CD8-positive, alpha-beta memory T cell (primary cell): ENCODE measurements at regions of chrX and their contacts with region 1.

Region 1: DNA sequence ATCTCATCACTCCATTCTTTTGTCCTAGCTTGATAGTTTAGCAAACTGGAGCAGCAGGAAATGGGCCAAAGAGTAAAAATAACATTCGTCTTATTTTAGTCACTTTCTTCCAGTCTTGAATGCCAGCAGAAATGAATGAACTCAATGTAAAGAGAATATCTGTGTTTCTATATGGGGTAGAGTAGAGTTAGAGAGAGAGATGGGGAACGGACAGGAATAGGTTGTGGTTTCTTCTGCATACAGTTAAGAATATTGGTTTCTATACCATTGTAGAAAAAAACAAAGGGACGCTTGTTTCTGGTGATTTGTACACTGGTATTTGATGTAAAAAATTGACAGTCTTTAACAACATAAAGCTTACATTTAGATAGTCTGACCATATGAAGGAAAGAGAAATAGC is 8.9 kb downstream of the GPR174 start:
- DNase-seq: no peak
- H3K4me3 ChIP-seq: peak overlapping the region; percentile 39
- H3K4me3 Mint-ChIP-seq: peak overlapping the region; percentile 73 to 84 (median 81)
- H3K27ac ChIP-seq: no peak overlapping the region
- H3K27ac Mint-ChIP-seq: peak overlapping the region; percentile 86 to 99 (median 90)
- H3K4me1 ChIP-seq: peaks cover 57% of the 10 kb centered on the region
- H3K4me1 Mint-ChIP-seq: peaks cover 41 to 82% (median 73%) of the 10 kb centered on the region in 3 donors
- H3K27me3 ChIP-seq: no peaks in the 10 kb centered on the region
- H3K27me3 Mint-ChIP-seq: no peaks in the 10 kb centered on the region

Region 2: GRCh38 chrX:79117078-79117477 is 36.3 kb before region 1 on chrX:
- CTCF ChIA-PET with region 1: no interaction called
- POLR2A ChIA-PET with region 1: no interaction called
- DNase-seq: no peak
- H3K4me3 ChIP-seq: no peak overlapping the region
- H3K4me3 Mint-ChIP-seq: peak overlapping the region in 3 of 7 donors; percentile 33 to 69 (median 54)
- H3K27ac ChIP-seq: no peak overlapping the region
- H3K27ac Mint-ChIP-seq: peak overlapping the region in 4 of 8 donors; percentile 7 to 92 (median 53)
- H3K4me1 ChIP-seq: peaks cover 14% of the 10 kb centered on the region
- H3K4me1 Mint-ChIP-seq: peaks cover 13 to 50% (median 22%) of the 10 kb centered on the region in 3 donors
- H3K27me3 ChIP-seq: no peaks in the 10 kb centered on the region
- H3K27me3 Mint-ChIP-seq: no peaks in the 10 kb centered on the region

Region 3: DNA sequence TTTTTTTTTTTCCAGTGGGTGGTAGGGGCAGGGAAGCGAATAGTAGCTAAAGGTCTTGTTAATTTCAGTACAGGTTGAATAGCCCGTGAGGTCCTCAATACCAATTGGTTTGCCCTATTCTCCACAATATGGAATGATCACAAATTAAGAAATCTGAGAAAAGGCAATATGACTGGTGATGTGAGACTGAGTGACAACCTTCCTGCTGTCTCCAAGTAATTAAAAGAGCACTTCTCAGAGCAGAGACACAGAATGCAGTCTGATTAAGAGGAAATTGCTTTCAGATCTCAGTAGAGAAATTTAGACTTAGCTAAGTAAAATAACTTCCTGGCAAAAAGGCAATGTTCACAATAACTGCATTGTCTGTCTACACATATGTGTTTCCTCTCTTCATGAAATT is 14.1 kb after region 1 on chrX:
- CTCF ChIA-PET with region 1: interaction called, 4 read pairs
- POLR2A ChIA-PET with region 1: interaction called, 11 read pairs
- DNase-seq: no peak
- H3K4me3 ChIP-seq: peak overlapping the region; percentile 46
- H3K4me3 Mint-ChIP-seq: peak overlapping the region; percentile 30 to 73 (median 64)
- H3K27ac ChIP-seq: peak overlapping the region; percentile 6
- H3K27ac Mint-ChIP-seq: peak overlapping the region; percentile 76 to 97 (median 88)
- H3K4me1 ChIP-seq: peaks cover 93% of the 10 kb centered on the region
- H3K4me1 Mint-ChIP-seq: peaks cover 68 to 97% (median 97%) of the 10 kb centered on the region in 3 donors
- H3K27me3 ChIP-seq: no peaks in the 10 kb centered on the region
- H3K27me3 Mint-ChIP-seq: peaks cover 0 to 3% of the 10 kb centered on the region in 2 donors

Region 4: DNA sequence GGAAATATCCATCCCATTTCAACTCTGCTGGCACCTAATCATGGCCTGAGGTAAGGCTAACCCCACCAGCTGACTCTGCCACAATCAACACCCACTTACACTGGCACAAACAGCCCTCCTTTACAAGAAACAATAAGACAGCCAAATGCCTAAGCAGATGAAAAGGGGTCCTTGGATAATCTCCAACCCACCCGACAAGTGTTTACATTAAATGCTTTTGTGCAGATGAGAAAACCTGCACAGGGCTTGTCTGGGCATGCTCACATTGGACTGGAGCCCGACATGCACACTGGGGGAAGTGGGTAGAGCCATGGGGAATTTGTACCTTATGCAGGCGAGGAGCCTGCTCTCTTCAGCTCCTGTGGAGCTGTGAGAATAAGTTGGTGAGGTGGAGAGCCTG is 352.7 kb after region 1 on chrX:
- CTCF ChIA-PET with region 1: no interaction called
- POLR2A ChIA-PET with region 1: no interaction called
- DNase-seq: no peak
- H3K4me3 ChIP-seq: no peak overlapping the region
- H3K4me3 Mint-ChIP-seq: no peak overlapping the region
- H3K27ac ChIP-seq: no peak overlapping the region
- H3K27ac Mint-ChIP-seq: no peak overlapping the region
- H3K4me1 ChIP-seq: no peaks in the 10 kb centered on the region
- H3K4me1 Mint-ChIP-seq: no peaks in the 10 kb centered on the region
- H3K27me3 ChIP-seq: no peaks in the 10 kb centered on the region
- H3K27me3 Mint-ChIP-seq: peaks cover 0 to 5% of the 10 kb centered on the region in 2 donors